CD8-positive, alpha-beta T cell (primary cell): ENCODE measurements at regions of chr17 and their contacts with region 1.

Region 1: DNA sequence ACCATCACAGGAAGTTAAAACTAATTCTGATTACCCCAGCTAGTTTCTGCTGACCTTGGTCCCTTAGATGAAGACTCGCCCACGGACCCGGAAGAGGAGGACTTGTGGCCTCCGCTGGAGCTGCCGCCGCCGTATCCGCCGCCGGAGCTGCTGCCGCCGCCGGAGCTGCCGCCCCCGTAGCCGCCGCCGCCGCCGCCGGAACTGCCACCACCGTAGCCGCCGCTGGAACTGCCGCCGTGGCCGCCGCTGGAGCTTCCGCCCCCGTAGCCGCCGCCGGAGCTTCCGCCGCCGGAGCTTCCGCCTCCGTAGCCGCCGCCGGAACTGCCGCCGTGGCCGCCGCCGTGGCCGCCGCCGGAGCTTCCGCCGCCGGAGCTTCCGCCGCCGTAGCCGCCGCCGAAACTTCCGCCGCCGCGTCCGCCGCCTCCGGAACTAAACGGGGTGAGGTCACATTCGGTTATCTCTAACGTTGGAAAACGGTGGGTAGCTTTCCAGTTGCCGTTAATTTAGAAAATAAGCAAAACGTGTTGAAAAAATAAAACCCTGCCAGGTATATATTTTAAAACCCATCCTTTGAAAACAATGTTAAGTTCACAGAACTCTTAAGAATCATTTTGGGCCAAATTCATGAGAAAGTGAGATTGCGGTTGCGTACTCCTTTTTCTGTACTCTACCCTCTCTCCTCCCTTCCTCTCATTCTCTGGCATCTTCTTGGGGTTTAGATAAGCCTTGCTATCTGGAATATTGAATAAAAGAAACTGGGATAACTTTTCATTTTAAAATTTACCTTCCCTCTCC is 3.5 kb downstream of the KRT10 start:
- DNase-seq: peak; percentile 70 to 94 (median 85)
- ATAC-seq: peak; percentile 76
- H3K4me3 ChIP-seq: peak overlapping the region; percentile 69 to 77
- H3K4me3 Mint-ChIP-seq: peak overlapping the region; percentile 91
- H3K27ac ChIP-seq: peak overlapping the region; percentile 70 to 79
- H3K27ac Mint-ChIP-seq: peak overlapping the region; percentile 95
- H3K4me1 ChIP-seq: peaks cover 17% of the 10 kb centered on the region
- H3K4me1 Mint-ChIP-seq: peaks cover 26% of the 10 kb centered on the region
- H3K27me3 ChIP-seq: peaks cover 0 to 3% of the 10 kb centered on the region in 2 experiments
- H3K27me3 Mint-ChIP-seq: peaks cover 10% of the 10 kb centered on the region
- CTCF ChIP-seq: no peak

Region 2: GRCh38 chr17:40664582-40665333 is 154.2 kb before region 1 on chr17 and contains the start of gene KRT222:
- CTCF ChIA-PET with region 1: no interaction called
- POLR2A ChIA-PET with region 1: no interaction called
- intact Hi-C with region 1: no loop called
- DNase-seq: no peak
- ATAC-seq: no peak
- H3K4me3 ChIP-seq: no peak within 1 kb of the TSS
- H3K4me3 Mint-ChIP-seq: peak within 1 kb of the TSS; percentile 26
- H3K27ac ChIP-seq: no peak within 1 kb of the TSS
- H3K27ac Mint-ChIP-seq: no peak within 1 kb of the TSS
- H3K4me1 ChIP-seq: peaks cover 5% of the 10 kb centered on the region
- H3K4me1 Mint-ChIP-seq: peaks cover 11% of the 10 kb centered on the region
- H3K27me3 ChIP-seq: no peaks in the 10 kb centered on the region
- H3K27me3 Mint-ChIP-seq: peaks cover 27% of the 10 kb centered on the region
- CTCF ChIP-seq: no peak
- total RNA-seq, gene KRT222: not detected

Region 3: DNA sequence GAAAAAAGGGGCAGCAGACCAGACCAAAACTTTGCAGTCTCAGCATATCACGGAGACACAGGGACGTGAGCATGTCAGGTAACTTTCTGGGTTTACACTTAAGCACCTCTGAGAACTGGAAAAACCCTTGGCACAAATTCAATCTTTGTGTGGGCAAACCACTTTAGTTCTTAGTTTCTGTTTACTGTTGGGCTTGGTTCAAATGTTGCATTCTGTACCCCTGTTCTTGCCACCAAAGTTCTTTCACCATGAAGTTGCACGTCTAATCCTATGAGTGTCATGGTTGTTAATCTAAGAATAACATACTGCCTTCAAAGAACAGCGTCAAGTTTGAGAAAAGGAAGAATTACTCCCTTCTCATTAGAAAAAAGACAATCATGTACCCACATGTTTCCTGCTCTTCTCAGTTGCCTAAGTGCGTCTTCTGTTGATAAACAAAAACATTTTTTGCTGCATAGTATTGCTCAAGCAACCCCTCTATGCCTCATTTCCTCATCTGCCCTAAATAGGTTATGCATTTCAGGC is 520.1 kb after region 1 on chr17:
- CTCF ChIA-PET with region 1: no interaction called
- POLR2A ChIA-PET with region 1: interaction called, 3 read pairs
- intact Hi-C with region 1: loop called in 1 of 2 experiments (anchors 5 kb)
- DNase-seq: peak in 5 of 9 experiments; percentile 38 to 94 (median 68)
- ATAC-seq: peak; percentile 82
- H3K4me3 ChIP-seq: peak overlapping the region in 1 of 2 experiments; percentile 2
- H3K4me3 Mint-ChIP-seq: peak overlapping the region; percentile 63
- H3K27ac ChIP-seq: peak overlapping the region; percentile 58 to 63
- H3K27ac Mint-ChIP-seq: peak overlapping the region; percentile 98
- H3K4me1 ChIP-seq: peaks cover 85% of the 10 kb centered on the region
- H3K4me1 Mint-ChIP-seq: peaks cover 90% of the 10 kb centered on the region
- H3K27me3 ChIP-seq: no peaks in the 10 kb centered on the region
- H3K27me3 Mint-ChIP-seq: no peaks in the 10 kb centered on the region
- CTCF ChIP-seq: no peak